B cell (primary cell): ENCODE measurements at regions of chr19 and their contacts with region 1.

Region 1: GRCh38 chr19:17021793-17022583 is 4.6 kb downstream of the CPAMD8 start:
- DNase-seq: no peak
- ATAC-seq: peak; percentile 17
- H3K4me3 ChIP-seq: no peak overlapping the region
- H3K4me3 Mint-ChIP-seq: no peak overlapping the region
- H3K27ac ChIP-seq: no peak overlapping the region
- H3K27ac Mint-ChIP-seq: no peak overlapping the region
- H3K4me1 ChIP-seq: peaks cover 8 to 15% of the 10 kb centered on the region in 2 donors
- H3K4me1 Mint-ChIP-seq: peaks cover 9% of the 10 kb centered on the region
- H3K27me3 ChIP-seq: peaks cover 0 to 18% (median 6%) of the 10 kb centered on the region in 4 experiments
- H3K27me3 Mint-ChIP-seq: peaks cover 19% of the 10 kb centered on the region
- CTCF ChIP-seq: no peak

Region 2: GRCh38 chr19:16998635-16999194 is 23.3 kb before region 1 on chr19:
- CTCF ChIA-PET with region 1: no interaction called
- POLR2A ChIA-PET with region 1: interaction called, 11 read pairs
- intact Hi-C with region 1: no loop called
- DNase-seq: no peak
- ATAC-seq: no peak
- H3K4me3 ChIP-seq: no peak overlapping the region
- H3K4me3 Mint-ChIP-seq: no peak overlapping the region
- H3K27ac ChIP-seq: no peak overlapping the region
- H3K27ac Mint-ChIP-seq: no peak overlapping the region
- H3K4me1 ChIP-seq: peaks cover 13 to 16% of the 10 kb centered on the region in 2 donors
- H3K4me1 Mint-ChIP-seq: peaks cover 17% of the 10 kb centered on the region
- H3K27me3 ChIP-seq: peaks cover 0 to 3% (median 0%) of the 10 kb centered on the region in 4 experiments
- H3K27me3 Mint-ChIP-seq: no peaks in the 10 kb centered on the region
- CTCF ChIP-seq: no peak